ENCODE measurements at regions of chr6 and their contacts with region 1.

Region 1: GRCh38 chr6:41424370-41425058 is 89.1 kb downstream of the NCR2 start:
- DNase-seq: peak; percentile 67
- H3K4me3 Mint-ChIP-seq: no peak overlapping the region
- H3K27ac Mint-ChIP-seq: no peak overlapping the region
- H3K4me1 Mint-ChIP-seq: peaks cover 8% of the 10 kb centered on the region
- H3K27me3 Mint-ChIP-seq: peaks cover 25% of the 10 kb centered on the region

Region 2: GRCh38 chr6:41367700-41368099 is 56.8 kb before region 1 on chr6:
- intact Hi-C with region 1: loop called (anchors 1 kb)
- DNase-seq: no peak
- H3K4me3 Mint-ChIP-seq: no peak overlapping the region
- H3K27ac Mint-ChIP-seq: no peak overlapping the region
- H3K4me1 Mint-ChIP-seq: peaks cover 22% of the 10 kb centered on the region
- H3K27me3 Mint-ChIP-seq: peaks cover 68% of the 10 kb centered on the region

Region 3: DNA sequence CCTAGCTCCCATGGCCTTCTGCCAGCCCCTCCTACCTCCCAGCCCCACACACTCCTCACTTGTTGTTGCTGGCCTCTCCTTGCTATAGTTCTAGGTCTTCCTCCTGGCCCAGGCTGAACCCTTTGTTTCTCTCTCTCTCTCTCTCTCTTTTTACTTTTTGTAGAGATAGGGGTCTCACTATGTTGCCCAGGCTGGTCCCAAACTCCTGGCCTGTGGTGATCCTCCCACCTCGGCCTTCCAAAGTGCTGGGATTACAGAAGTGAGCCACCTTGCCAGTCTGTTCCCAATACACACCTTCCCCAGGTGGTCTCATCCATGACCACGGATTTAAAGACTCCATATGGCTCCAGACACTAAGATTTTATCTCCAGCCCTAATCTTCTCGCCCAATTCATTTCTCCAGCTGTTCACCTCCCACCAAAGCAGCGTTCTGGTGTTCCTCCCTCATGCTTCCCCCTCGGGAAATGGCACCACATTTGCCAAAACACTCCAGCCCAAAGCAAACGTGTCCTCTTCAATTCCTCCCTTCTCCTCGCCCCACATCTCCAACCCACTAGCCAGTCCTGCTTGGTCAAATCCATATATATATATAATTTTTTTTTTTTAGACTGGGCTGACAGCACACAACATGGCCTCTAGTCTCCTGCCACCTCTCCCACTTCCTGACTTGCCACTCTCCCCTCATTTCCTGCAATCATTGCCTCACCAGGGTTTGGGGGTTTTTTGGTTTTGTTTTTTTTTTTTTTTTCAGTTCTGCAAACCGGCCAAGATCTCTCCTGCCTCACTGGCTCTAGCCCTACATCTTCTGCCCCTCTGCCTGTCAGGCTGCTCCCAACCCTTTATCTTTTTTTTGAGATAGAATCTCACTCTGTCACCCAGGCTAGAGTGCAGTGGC is 15.3 kb after region 1 on chr6:
- intact Hi-C with region 1: loop called (anchors 2 kb)
- DNase-seq: peak; percentile 25
- H3K4me3 Mint-ChIP-seq: peak overlapping the region; percentile 35
- H3K27ac Mint-ChIP-seq: peak overlapping the region; percentile 47
- H3K4me1 Mint-ChIP-seq: peaks cover 34% of the 10 kb centered on the region
- H3K27me3 Mint-ChIP-seq: peaks cover 40% of the 10 kb centered on the region

Region 4: GRCh38 chr6:41531591-41532582 is 107.4 kb after region 1 on chr6:
- intact Hi-C with region 1: loop called (anchors 1 kb)
- DNase-seq: peak; percentile 63
- H3K4me3 Mint-ChIP-seq: peak overlapping the region; percentile 76
- H3K27ac Mint-ChIP-seq: peak overlapping the region; percentile 92
- H3K4me1 Mint-ChIP-seq: peaks cover 50% of the 10 kb centered on the region
- H3K27me3 Mint-ChIP-seq: peaks cover 38% of the 10 kb centered on the region

Region 5: DNA sequence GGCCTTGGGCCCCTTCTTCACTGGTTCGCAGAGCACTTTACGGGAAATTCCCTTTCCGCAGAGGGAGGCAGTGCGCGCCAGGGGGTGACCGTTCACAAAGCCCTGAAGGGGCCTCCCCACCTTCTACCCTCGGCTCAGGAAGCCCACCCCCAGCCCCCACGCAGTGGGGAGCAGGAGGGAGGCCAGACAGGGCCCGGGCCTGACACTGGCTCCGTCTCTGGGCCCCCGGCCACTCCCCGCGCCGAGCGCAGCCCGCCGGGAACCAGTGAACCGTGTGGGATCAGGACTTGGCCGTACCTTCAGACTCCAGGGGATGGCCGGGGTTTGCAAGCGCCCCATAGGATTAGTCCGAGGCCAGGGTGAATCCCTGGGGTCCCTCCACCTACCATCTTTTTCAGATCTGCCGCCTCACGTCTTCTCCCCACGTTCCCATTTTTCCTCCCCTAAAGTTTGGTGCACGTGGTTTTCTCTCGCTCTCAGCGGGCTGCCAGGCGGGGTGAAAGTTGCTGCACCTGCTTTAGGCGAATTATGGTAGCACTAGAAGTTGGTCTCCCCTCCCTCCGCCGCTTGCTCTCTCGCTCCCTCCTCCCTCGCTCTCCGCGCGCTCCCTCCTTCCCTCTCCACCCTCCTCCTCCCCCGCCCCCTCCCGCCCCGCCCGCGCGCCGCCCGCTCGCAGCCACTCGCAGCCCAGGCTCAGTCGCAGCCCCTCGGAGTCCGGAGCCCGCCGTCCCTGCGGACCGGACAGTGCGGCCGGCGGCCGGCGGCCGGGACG is 121.4 kb after region 1 on chr6 and contains the start of gene FOXP4:
- intact Hi-C with region 1: loop called (anchors 1 kb)
- DNase-seq: peak; percentile 77
- H3K4me3 Mint-ChIP-seq: peak within 1 kb of the TSS; percentile 88
- H3K27ac Mint-ChIP-seq: peak within 1 kb of the TSS; percentile 90
- H3K4me1 Mint-ChIP-seq: peaks cover 34% of the 10 kb centered on the region
- H3K27me3 Mint-ChIP-seq: peaks cover 39% of the 10 kb centered on the region
- total RNA-seq, gene FOXP4: 21.6 and 24.0 TPM in 2 replicates

Region 6: GRCh38 chr6:41591859-41592502 is 167.5 kb after region 1 on chr6:
- intact Hi-C with region 1: loop called (anchors 1 kb)
- DNase-seq: peak; percentile 60
- H3K4me3 Mint-ChIP-seq: no peak overlapping the region
- H3K27ac Mint-ChIP-seq: no peak overlapping the region
- H3K4me1 Mint-ChIP-seq: no peaks in the 10 kb centered on the region
- H3K27me3 Mint-ChIP-seq: no peaks in the 10 kb centered on the region

Region 7: DNA sequence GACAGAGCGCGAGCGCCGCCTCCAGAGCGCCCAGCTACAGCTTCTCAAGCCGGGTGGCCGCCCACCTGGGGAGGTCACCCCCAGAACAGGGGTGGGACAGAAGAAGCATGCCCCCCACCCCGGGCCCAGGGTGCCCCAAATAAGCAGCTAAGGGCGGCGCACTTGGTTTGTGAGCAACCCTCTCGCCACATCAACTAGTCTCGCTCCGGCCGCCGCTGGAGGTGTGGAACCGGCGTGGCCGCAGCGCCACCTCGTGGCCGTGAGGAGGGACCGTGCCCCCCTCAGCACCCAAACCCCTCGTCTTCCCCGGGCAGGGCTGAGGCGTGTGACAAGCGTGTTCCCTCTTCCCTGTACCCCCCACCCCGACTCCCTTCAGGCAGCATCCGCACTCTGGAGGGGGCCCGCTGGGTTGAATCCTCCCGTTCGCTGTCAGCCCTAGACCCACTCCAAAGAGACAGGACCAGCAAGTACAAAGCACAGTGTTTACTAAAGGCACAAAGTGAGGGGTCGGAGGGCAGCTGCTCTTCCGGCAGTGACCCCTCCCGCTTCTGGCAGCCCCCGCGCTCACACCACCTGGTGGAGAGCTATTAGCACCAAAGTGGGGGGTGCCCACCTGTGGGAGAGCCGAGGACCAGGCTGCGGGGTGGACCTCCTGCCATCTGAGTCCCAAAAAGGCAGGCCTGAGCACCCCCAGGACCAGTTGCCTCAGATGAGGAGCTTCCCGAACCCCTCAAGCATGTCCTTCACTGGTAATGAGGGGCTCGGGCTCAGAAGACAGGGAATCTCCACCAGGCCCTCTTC is 259.2 kb after region 1 on chr6:
- intact Hi-C with region 1: loop called (anchors 1 kb)
- DNase-seq: peak; percentile 71
- H3K4me3 Mint-ChIP-seq: peak overlapping the region; percentile 75
- H3K27ac Mint-ChIP-seq: peak overlapping the region; percentile 73
- H3K4me1 Mint-ChIP-seq: peaks cover 6% of the 10 kb centered on the region
- H3K27me3 Mint-ChIP-seq: no peaks in the 10 kb centered on the region

Measured in activated T-helper 1 cell treated with anti-CD3 and anti-CD28 coated beads, Interleukin-12 subunit alpha, Interleukin-12 subunit beta, Interleukin-2, Interleukin-4 antibody, amounts not matched to agents 30 ng/mL and 10 ng/mL and 1 ng/mL, durations not matched to agents 14 hours and 24 hours and 36 hours (primary cell).